ENCODE measurements at regions of chr3 and their contacts with region 1.

Region 1: GRCh38 chr3:12695112-12695511 is 31.2 kb upstream of the RAF1 start:
- DNase-seq: no peak
- ATAC-seq: no peak
- H3K4me3 Mint-ChIP-seq: no peak overlapping the region
- H3K27ac Mint-ChIP-seq: no peak overlapping the region
- H3K4me1 Mint-ChIP-seq: peaks cover 10% of the 10 kb centered on the region
- H3K27me3 Mint-ChIP-seq: no peaks in the 10 kb centered on the region
- CTCF ChIP-seq: no peak

Region 2: DNA sequence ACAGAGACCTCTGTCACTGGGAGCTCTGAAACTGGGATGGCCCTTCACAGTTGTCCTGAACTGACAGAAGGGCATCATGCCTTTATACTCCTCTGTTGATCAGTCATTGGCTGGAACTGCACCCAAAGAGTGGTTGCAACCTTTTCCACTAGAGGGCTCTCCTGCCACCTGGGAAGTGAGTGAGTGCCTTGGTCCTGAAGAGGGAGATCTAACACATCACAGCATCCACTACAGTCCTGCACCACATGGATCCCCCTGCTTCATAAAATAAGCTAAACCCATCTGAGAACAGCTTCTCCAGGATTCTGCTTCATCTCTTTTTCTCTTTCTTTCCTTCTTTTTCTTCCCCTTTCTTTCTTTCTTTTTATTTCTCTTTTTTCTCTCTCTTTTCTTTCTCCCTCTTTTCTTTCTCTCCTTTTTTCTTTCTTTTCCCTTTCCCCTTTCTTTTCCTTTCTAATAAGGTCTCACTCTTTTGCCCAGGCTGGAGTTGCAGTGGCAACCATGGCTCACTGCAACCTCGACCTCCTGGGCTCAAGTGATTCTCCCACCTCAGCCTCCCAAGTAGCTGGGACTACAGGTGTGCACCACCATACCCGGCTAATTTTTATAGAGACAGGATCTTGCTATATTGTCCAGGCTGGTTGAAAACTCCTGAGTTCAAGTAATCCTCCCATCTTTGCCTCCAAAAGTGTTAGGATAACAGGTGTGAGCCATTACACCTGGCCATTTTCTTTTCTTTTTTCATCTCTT is 11.6 kb after region 1 on chr3:
- CTCF ChIA-PET with region 1: interaction called, 12 read pairs
- POLR2A ChIA-PET with region 1: no interaction called
- DNase-seq: peak; percentile 78
- ATAC-seq: peak; percentile 99
- H3K4me3 Mint-ChIP-seq: no peak overlapping the region
- H3K27ac Mint-ChIP-seq: no peak overlapping the region
- H3K4me1 Mint-ChIP-seq: no peaks in the 10 kb centered on the region
- H3K27me3 Mint-ChIP-seq: no peaks in the 10 kb centered on the region
- CTCF ChIP-seq: peak; percentile 44; the same call in 1 of the 2 replicates